ENCODE measurements at regions of chr6 and their contacts with region 1.

Region 1: DNA sequence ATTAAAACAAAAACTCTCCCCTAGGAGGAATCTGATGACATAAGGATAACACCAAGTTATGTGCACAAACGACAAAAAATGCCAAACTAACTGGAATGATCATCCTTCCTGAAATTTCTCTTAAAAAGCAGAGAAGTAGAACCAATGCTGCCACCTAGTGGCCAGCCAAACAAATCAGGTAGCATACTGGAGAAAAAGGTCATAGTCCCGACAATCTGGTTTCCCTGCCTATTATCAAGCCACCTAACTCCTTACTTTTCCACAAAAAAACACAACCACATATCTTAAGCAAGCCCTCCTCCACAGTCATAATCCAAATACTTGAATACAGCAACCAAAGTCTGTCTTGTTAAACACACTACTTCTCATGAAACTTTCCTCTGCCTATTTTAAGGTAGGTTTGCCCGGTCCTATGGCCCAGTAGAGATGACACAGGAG is 5.3 kb downstream of the OARD1 start:
- DNase-seq: peak; percentile 88
- ATAC-seq: no peak
- H3K4me3 ChIP-seq: no peak overlapping the region
- H3K27ac ChIP-seq: no peak overlapping the region
- H3K4me1 ChIP-seq: peaks cover 65% of the 10 kb centered on the region
- H3K27me3 ChIP-seq: no peaks in the 10 kb centered on the region; a peak in 1 of 5 replicates
- CTCF ChIP-seq: peak; percentile 90
- EP300 ChIP-seq: no peak
- POLR2A ChIP-seq: no peak
- RAD21 ChIP-seq: peak; percentile 78

Region 2: DNA sequence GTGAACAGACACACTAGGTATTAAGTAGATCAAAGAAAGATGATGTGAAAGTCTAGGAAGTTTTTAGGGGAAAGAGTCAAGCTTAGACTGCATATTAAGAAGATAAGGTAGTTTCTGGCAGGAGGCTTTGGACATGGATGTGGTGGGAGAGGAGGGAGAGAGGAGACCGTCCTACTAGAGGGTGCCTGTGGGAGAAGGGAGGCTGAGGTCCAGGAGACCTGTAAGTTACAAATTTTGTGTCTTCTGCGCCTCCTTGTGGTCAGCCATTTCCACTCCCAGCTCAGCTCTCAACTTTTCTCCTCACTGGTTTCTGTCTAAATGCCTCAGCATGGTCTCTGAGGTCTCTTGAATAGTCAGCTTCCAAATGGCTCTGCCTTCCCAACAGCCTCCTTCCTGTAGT is 221.3 kb before region 1 on chr6:
- CTCF ChIA-PET with region 1: no interaction called
- POLR2A ChIA-PET with region 1: no interaction called
- in situ Hi-C with region 1: no loop called
- intact Hi-C with region 1: loop called (anchors 5 kb)
- DNase-seq: peak; percentile 48
- ATAC-seq: peak; percentile 87
- H3K4me3 ChIP-seq: no peak overlapping the region
- H3K27ac ChIP-seq: no peak overlapping the region
- H3K4me1 ChIP-seq: no peaks in the 10 kb centered on the region
- H3K27me3 ChIP-seq: peaks cover 0 to 10% of the 10 kb centered on the region in 2 experiments; a peak in 3 of 5 replicates
- CTCF ChIP-seq: peak; percentile 73
- EP300 ChIP-seq: no peak
- POLR2A ChIP-seq: no peak
- RAD21 ChIP-seq: peak; percentile 45; the same call in 1 of the 2 replicates

Region 3: GRCh38 chr6:40999569-40999968 is 67.3 kb before region 1 on chr6:
- CTCF ChIA-PET with region 1: no interaction called
- POLR2A ChIA-PET with region 1: interaction called, 36 read pairs
- in situ Hi-C with region 1: loop called (anchors 5 kb)
- intact Hi-C with region 1: loop called (anchors 2 kb)
- DNase-seq: peak; percentile 80
- ATAC-seq: peak; percentile 82
- H3K4me3 ChIP-seq: no peak overlapping the region
- H3K27ac ChIP-seq: no peak overlapping the region
- H3K4me1 ChIP-seq: peaks cover 74% of the 10 kb centered on the region
- H3K27me3 ChIP-seq: no peaks in the 10 kb centered on the region
- CTCF ChIP-seq: peak; percentile 89
- EP300 ChIP-seq: peak in 1 of 2 experiments; percentile 6; a peak in 1 of 4 replicates
- POLR2A ChIP-seq: no peak
- RAD21 ChIP-seq: peak; percentile 46; the same call in 1 of the 2 replicates

Region 4: DNA sequence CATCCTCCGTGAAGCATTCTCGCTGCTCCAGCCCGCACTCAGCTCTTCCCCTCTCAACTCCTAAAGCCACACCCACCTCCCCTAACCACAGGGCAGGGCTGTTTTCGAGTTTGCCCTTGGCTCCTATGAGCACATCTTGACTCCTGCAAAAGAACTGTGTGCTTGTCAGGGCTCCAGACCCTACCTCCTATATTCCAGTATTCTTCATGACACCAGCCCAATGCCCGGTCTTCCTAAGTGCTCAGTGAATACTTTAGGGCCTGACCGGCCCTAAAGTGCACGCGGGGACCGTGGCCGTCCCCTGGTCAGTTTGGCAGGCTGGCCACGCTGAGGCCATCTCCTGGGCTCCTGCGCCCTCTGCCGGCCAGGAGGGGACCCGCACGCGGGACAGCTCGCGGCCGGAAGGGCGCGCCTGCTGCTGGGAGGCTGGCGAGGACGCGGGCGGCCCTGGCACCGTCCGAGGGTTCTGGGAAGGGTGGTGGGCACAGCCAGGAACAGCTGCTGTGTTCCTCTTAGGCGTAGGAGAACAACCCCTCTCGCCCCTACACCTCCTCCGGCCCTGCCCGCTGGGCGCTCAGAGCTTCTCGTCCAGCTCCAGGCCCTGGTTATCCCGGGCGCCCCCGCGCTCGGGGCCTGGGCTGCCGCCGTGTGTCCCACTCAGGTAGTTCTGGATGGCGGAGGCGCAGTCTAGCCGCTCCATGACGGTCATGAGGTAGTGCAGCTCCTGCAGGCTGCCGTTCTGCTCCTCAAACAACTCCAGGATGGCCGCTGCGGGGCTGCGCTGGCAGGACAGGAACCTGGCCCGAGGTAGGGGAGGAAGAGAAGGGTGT is 38.9 kb before region 1 on chr6:
- CTCF ChIA-PET with region 1: interaction called, 56 read pairs
- POLR2A ChIA-PET with region 1: interaction called, 4 read pairs
- in situ Hi-C with region 1: loop called (anchors 5 kb)
- intact Hi-C with region 1: loop called (anchors 1 kb)
- DNase-seq: peak; percentile 47
- ATAC-seq: peak; percentile 95
- H3K4me3 ChIP-seq: peak overlapping the region in 1 of 3 experiments; percentile 45; a peak in 1 of 6 replicates
- H3K27ac ChIP-seq: no peak overlapping the region
- H3K4me1 ChIP-seq: peaks cover 19% of the 10 kb centered on the region
- H3K27me3 ChIP-seq: no peaks in the 10 kb centered on the region
- CTCF ChIP-seq: peak; percentile 99
- EP300 ChIP-seq: no peak
- POLR2A ChIP-seq: no peak
- RAD21 ChIP-seq: peak; percentile 99

Region 5: GRCh38 chr6:41051873-41052272 is 15.0 kb before region 1 on chr6:
- CTCF ChIA-PET with region 1: no interaction called
- POLR2A ChIA-PET with region 1: interaction called, 20 read pairs
- in situ Hi-C with region 1: no loop called
- intact Hi-C with region 1: no loop called
- DNase-seq: no peak
- ATAC-seq: no peak
- H3K4me3 ChIP-seq: no peak overlapping the region
- H3K27ac ChIP-seq: no peak overlapping the region
- H3K4me1 ChIP-seq: peaks cover 66% of the 10 kb centered on the region
- H3K27me3 ChIP-seq: no peaks in the 10 kb centered on the region
- CTCF ChIP-seq: no peak
- EP300 ChIP-seq: no peak
- POLR2A ChIP-seq: no peak
- RAD21 ChIP-seq: no peak

Measured in HepG2 (cell line).